CD4-positive, alpha-beta T cell (primary cell): ENCODE measurements at regions of chr1 and their contacts with region 1.

Region 1: GRCh38 chr1:178354816-178355215 is 141.9 kb downstream of the CLEC20A start:
- DNase-seq: no peak
- ATAC-seq: no peak
- H3K4me3 ChIP-seq: no peak overlapping the region
- H3K4me3 Mint-ChIP-seq: no peak overlapping the region
- H3K27ac ChIP-seq: no peak overlapping the region
- H3K27ac Mint-ChIP-seq: no peak overlapping the region
- H3K4me1 ChIP-seq: no peaks in the 10 kb centered on the region
- H3K4me1 Mint-ChIP-seq: no peaks in the 10 kb centered on the region
- H3K27me3 ChIP-seq: no peaks in the 10 kb centered on the region
- H3K27me3 Mint-ChIP-seq: no peaks in the 10 kb centered on the region
- CTCF ChIP-seq: no peak

Region 2: GRCh38 chr1:178282949-178283367 is 71.9 kb before region 1 on chr1:
- CTCF ChIA-PET with region 1: no interaction called
- POLR2A ChIA-PET with region 1: no interaction called
- intact Hi-C with region 1: no loop called
- DNase-seq: peak in 2 of 14 experiments; percentile 7 to 11
- ATAC-seq: no peak
- H3K4me3 ChIP-seq: no peak overlapping the region
- H3K4me3 Mint-ChIP-seq: no peak overlapping the region
- H3K27ac ChIP-seq: no peak overlapping the region
- H3K27ac Mint-ChIP-seq: no peak overlapping the region
- H3K4me1 ChIP-seq: no peaks in the 10 kb centered on the region
- H3K4me1 Mint-ChIP-seq: no peaks in the 10 kb centered on the region
- H3K27me3 ChIP-seq: no peaks in the 10 kb centered on the region
- H3K27me3 Mint-ChIP-seq: no peaks in the 10 kb centered on the region
- CTCF ChIP-seq: no peak

Region 3: GRCh38 chr1:178407655-178408054 is 52.8 kb after region 1 on chr1:
- CTCF ChIA-PET with region 1: no interaction called
- POLR2A ChIA-PET with region 1: no interaction called
- intact Hi-C with region 1: loop called in 1 of 2 experiments (anchors 5 kb)
- DNase-seq: no peak
- ATAC-seq: no peak
- H3K4me3 ChIP-seq: no peak overlapping the region
- H3K4me3 Mint-ChIP-seq: no peak overlapping the region
- H3K27ac ChIP-seq: no peak overlapping the region
- H3K27ac Mint-ChIP-seq: no peak overlapping the region
- H3K4me1 ChIP-seq: no peaks in the 10 kb centered on the region
- H3K4me1 Mint-ChIP-seq: no peaks in the 10 kb centered on the region
- H3K27me3 ChIP-seq: no peaks in the 10 kb centered on the region
- H3K27me3 Mint-ChIP-seq: peaks cover 5% of the 10 kb centered on the region
- CTCF ChIP-seq: no peak